Endothelial cell of umbilical vein (primary cell): ENCODE measurements at regions of chr7 and their contacts with region 1.

Region 1: GRCh38 chr7:139915864-139916716 is 87.0 kb downstream of the TBXAS1 start:
- DNase-seq: peak; percentile 88
- H3K4me3 ChIP-seq: no peak overlapping the region
- H3K27ac ChIP-seq: peak overlapping the region; percentile 72
- H3K4me1 ChIP-seq: peaks cover 30% of the 10 kb centered on the region
- H3K27me3 ChIP-seq: peaks cover 0 to 2% of the 10 kb centered on the region in 2 experiments
- CTCF ChIP-seq: no peak
- POLR2A ChIP-seq: no peak

Region 2: GRCh38 chr7:139731802-139732470 is 184.2 kb before region 1 on chr7:
- CTCF ChIA-PET with region 1: no interaction called
- POLR2A ChIA-PET with region 1: no interaction called
- dilution Hi-C with region 1: no loop called
- intact Hi-C with region 1: no loop called
- DNase-seq: peak; percentile 81
- H3K4me3 ChIP-seq: peak overlapping the region in 1 of 3 experiments; percentile 50
- H3K27ac ChIP-seq: peak overlapping the region; percentile 87
- H3K4me1 ChIP-seq: peaks cover 53% of the 10 kb centered on the region
- H3K27me3 ChIP-seq: no peaks in the 10 kb centered on the region
- CTCF ChIP-seq: no peak
- POLR2A ChIP-seq: no peak

Region 3: GRCh38 chr7:139871267-139871721 is 44.8 kb before region 1 on chr7:
- CTCF ChIA-PET with region 1: no interaction called
- POLR2A ChIA-PET with region 1: no interaction called
- dilution Hi-C with region 1: no loop called
- intact Hi-C with region 1: loop called (anchors 2 kb)
- DNase-seq: peak; percentile 83
- H3K4me3 ChIP-seq: no peak overlapping the region
- H3K27ac ChIP-seq: no peak overlapping the region
- H3K4me1 ChIP-seq: peaks cover 14% of the 10 kb centered on the region
- H3K27me3 ChIP-seq: no peaks in the 10 kb centered on the region
- CTCF ChIP-seq: no peak
- POLR2A ChIP-seq: no peak

Region 4: DNA sequence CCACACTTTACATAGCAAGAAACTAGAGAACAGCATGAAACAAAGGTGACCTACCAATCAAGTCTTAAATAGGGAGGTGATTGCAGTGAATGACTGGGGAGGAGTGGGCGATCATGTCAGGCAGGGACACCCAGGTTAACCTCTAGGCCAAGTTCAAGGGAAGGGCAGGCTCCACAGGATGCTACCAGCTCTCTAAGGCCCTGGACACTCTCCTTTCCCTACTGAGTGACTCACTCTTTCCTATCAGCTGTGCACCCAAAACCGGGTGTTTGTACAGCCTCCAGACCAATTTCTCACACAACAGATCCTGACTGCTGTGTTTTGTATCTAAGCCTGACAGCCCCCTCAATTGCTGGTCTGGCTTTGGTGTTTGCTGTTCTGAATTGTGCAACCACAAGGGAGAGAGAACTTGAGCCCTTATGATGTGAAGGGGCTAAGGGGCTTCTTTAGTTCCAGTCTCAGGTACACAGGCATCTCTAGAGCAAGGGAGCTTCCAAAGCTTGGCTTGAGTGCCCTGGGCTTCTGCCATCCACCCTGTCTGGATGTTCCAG is 20.7 kb after region 1 on chr7:
- CTCF ChIA-PET with region 1: interaction called, 5 read pairs
- POLR2A ChIA-PET with region 1: no interaction called
- dilution Hi-C with region 1: no loop called
- intact Hi-C with region 1: loop called (anchors 2 kb)
- DNase-seq: peak; percentile 74
- H3K4me3 ChIP-seq: no peak overlapping the region
- H3K27ac ChIP-seq: no peak overlapping the region
- H3K4me1 ChIP-seq: peaks cover 3% of the 10 kb centered on the region
- H3K27me3 ChIP-seq: no peaks in the 10 kb centered on the region
- CTCF ChIP-seq: no peak
- POLR2A ChIP-seq: no peak

Region 5: DNA sequence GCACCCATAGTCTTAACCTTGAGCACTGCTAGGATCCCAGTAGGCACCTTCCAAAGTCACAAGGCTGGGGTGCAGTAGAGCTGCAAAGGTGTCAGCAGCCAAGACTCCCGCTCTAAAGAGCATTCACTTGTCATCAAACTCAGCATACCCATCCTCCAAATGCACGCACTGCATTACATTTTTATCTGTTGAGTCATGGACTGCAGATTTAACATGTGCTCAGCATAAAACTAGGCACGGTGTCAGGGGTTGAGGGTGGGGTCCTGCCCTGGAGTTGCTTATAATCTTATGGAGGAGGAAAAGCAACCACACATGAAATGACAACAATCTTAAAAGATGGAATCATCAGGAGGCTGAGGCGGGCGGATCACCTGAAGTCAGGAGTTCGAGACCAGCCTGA is 44.1 kb after region 1 on chr7:
- CTCF ChIA-PET with region 1: no interaction called
- POLR2A ChIA-PET with region 1: no interaction called
- dilution Hi-C with region 1: no loop called
- intact Hi-C with region 1: no loop called
- DNase-seq: no peak
- H3K4me3 ChIP-seq: no peak overlapping the region
- H3K27ac ChIP-seq: no peak overlapping the region
- H3K4me1 ChIP-seq: no peaks in the 10 kb centered on the region
- H3K27me3 ChIP-seq: peaks cover 0 to 3% of the 10 kb centered on the region in 2 experiments
- CTCF ChIP-seq: no peak
- POLR2A ChIP-seq: no peak